Caco-2 (cell line): ENCODE measurements at regions of chr11 and their contacts with region 1.

Region 1: GRCh38 chr11:84691830-84692229 is 935.3 kb downstream of the DLG2 start:
- DNase-seq: no peak
- H3K4me3 ChIP-seq: no peak overlapping the region
- H3K4me3 Mint-ChIP-seq: no peak overlapping the region
- H3K27ac Mint-ChIP-seq: no peak overlapping the region
- H3K4me1 ChIP-seq: peaks cover 7% of the 10 kb centered on the region; the same call in 1 of the 2 replicates
- H3K4me1 Mint-ChIP-seq: peaks cover 8% of the 10 kb centered on the region
- H3K27me3 ChIP-seq: no peaks in the 10 kb centered on the region
- H3K27me3 Mint-ChIP-seq: peaks cover 5% of the 10 kb centered on the region
- CTCF ChIP-seq: no peak

Region 2: GRCh38 chr11:84573868-84574267 is 118.0 kb before region 1 on chr11:
- CTCF ChIA-PET with region 1: no interaction called
- POLR2A ChIA-PET with region 1: no interaction called
- intact Hi-C with region 1: no loop called
- DNase-seq: no peak
- H3K4me3 ChIP-seq: no peak overlapping the region
- H3K4me3 Mint-ChIP-seq: no peak overlapping the region
- H3K27ac Mint-ChIP-seq: no peak overlapping the region
- H3K4me1 ChIP-seq: no peaks in the 10 kb centered on the region
- H3K4me1 Mint-ChIP-seq: no peaks in the 10 kb centered on the region
- H3K27me3 ChIP-seq: no peaks in the 10 kb centered on the region; the same call in 1 of the 2 replicates
- H3K27me3 Mint-ChIP-seq: peaks cover 3% of the 10 kb centered on the region
- CTCF ChIP-seq: no peak

Region 3: DNA sequence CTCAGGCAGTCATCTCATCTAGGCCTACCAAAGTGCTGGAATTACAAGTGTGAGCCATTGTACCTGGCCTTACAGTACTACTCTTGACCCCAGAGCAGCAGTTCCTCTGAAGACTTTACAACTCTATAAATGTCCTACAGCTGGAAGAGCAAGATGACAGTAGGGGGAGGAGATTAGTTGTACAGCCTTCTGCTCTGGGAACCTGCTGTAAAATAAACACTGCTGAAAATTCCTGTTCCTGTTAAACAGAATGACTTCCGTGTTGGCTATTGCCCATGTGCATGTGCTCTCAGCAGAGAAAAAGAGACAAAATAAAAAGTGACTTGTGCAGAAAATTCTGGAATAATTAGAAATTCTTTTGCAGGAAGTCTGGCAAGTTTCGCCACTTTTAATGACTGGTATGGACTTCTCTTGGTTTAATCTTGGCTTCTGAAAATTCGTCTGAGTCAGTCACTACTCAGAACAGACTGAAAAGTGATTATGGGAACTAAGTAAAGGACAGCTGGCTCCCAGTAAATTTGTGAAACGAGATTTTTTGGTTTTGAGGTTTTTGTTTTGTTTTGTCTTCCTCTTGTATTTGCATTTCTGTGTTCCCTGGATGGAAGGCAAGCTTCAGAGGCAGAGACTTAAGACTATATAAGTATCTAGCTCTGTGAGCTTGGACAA is 20.4 kb before region 1 on chr11:
- CTCF ChIA-PET with region 1: no interaction called
- POLR2A ChIA-PET with region 1: no interaction called
- intact Hi-C with region 1: loop called (anchors 1 kb)
- DNase-seq: peak in 1 of 2 experiments; percentile 17
- H3K4me3 ChIP-seq: no peak overlapping the region
- H3K4me3 Mint-ChIP-seq: no peak overlapping the region
- H3K27ac Mint-ChIP-seq: no peak overlapping the region
- H3K4me1 ChIP-seq: no peaks in the 10 kb centered on the region
- H3K4me1 Mint-ChIP-seq: peaks cover 7% of the 10 kb centered on the region
- H3K27me3 ChIP-seq: no peaks in the 10 kb centered on the region
- H3K27me3 Mint-ChIP-seq: peaks cover 12% of the 10 kb centered on the region
- CTCF ChIP-seq: no peak